ENCODE measurements at regions of chr15 and their contacts with region 1.

Region 1: GRCh38 chr15:38440353-38441129 is 13.4 kb upstream of the FAM98B start:
- DNase-seq: peak in 1 of 2 donors; percentile 56
- ATAC-seq: peak; percentile 83 to 97 (median 92)
- H3K4me3 ChIP-seq: no peak overlapping the region
- H3K27ac ChIP-seq: no peak overlapping the region
- H3K4me1 ChIP-seq: no peaks in the 10 kb centered on the region
- H3K27me3 ChIP-seq: peaks cover 0 to 5% (median 0%) of the 10 kb centered on the region in 3 donors
- CTCF ChIP-seq: peak; percentile 91

Region 2: DNA sequence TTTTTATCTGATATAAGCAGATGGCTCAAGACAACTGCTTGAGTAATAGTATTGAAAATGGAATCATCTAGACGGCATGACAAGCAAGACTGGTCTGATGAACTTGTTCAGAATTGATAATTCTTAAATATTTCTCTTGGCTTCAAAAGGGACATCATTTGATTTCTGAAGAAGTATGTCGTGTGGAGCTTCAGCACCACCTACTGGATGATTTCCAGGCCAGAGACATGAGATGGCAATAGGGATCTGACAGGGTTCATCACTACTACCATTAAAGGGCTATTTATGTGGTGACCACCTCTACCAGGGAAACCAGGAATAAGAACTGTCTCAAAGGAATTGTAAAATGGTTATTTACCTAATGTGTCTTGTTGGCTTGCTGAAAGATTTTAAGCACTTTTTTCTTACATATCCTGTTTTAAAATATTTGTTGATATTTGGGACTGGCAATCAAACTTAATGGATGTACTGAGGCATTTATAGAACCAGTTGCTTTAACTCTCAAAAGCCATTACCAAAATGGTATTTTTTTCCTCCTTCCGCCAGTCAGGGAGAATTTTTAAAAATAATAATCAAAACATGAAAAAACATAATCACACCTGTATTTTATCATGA is 86.1 kb before region 1 on chr15:
- intact Hi-C with region 1: no loop called
- DNase-seq: peak; percentile 29 to 45
- ATAC-seq: peak in 2 of 4 donors; percentile 47 to 71
- H3K4me3 ChIP-seq: no peak overlapping the region
- H3K27ac ChIP-seq: no peak overlapping the region
- H3K4me1 ChIP-seq: no peaks in the 10 kb centered on the region
- H3K27me3 ChIP-seq: no peaks in the 10 kb centered on the region
- CTCF ChIP-seq: peak; percentile 79

Region 3: DNA sequence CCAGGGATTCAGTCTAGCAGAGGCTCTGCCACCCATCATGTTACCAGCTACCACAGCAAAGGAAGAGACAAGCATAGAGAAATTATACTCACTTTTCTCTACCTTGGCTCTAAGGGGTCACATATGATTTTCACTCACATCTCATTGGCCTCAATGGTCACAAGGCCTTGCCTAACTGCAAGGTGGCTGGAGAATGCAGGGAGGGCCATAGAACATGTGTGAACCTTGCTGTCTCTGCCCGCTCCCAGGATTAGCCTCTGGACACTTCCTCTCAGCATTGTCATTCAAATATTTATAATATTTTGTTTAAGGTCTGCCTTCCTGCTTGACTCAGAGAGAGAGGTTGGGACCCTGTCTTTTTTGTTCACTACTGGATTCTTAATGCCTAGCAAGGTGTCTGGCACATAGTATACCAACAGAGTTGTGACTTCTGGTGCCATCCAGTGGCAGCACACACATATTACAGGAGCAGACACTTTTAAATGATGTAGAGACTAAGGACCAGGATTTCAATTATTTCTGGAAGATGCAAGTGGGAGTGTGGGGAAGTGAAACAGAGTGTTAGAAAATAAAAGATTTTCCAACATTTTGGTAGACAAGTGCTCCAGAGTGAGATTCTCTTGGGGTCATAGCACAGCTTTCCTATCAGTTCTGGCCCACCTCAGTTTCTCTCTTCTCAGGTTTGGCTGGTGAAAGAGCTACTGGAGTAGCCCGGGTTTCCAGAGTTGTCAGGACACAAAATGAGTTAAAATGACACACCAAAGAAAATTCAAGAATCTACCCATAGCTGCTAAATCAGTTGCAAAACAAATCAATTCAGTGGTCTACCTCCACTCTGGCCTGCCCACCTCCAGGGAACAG is 243.1 kb after region 1 on chr15:
- intact Hi-C with region 1: loop called (anchors 2 to 5 kb)
- DNase-seq: peak in 1 of 2 donors; percentile 15
- ATAC-seq: peak in 3 of 4 donors; percentile 56 to 74 (median 67)
- H3K4me3 ChIP-seq: no peak overlapping the region
- H3K27ac ChIP-seq: no peak overlapping the region
- H3K4me1 ChIP-seq: no peaks in the 10 kb centered on the region
- H3K27me3 ChIP-seq: peaks cover 0 to 4% (median 0%) of the 10 kb centered on the region in 3 donors
- CTCF ChIP-seq: peak; percentile 60

Region 4: GRCh38 chr15:38688761-38689160 is 248.2 kb after region 1 on chr15:
- intact Hi-C with region 1: loop called (anchors 2 to 5 kb)
- DNase-seq: no peak
- ATAC-seq: no peak
- H3K4me3 ChIP-seq: no peak overlapping the region
- H3K27ac ChIP-seq: no peak overlapping the region
- H3K4me1 ChIP-seq: no peaks in the 10 kb centered on the region
- H3K27me3 ChIP-seq: peaks cover 0 to 4% (median 0%) of the 10 kb centered on the region in 3 donors
- CTCF ChIP-seq: no peak

Region 5: DNA sequence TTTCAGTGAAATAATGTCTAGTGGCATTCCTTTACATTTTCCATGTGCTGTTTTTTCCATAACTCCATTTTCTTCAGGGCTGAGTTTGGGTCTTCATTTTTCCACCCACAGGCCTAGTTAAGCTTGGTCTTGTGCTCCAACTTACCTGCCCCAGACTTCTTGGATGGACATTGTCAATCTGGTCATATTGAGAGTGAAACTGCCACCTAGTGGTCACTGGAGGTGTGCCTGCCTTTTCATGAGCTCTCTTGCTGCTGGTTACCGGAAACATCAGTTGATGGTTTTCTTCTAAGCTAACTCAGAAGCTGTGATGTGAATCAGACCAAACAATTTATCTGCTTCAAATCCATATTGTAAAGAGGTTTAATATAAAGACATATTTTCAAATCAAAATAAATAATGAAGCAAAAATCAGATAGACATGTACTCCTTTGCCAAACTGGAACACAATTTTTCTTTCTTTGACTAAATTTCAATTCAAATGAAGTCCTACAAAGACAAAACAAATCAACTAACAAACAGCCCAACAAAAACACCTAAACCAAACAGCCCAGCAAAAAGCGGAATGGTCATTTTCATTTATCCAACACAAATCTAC is 259.2 kb after region 1 on chr15:
- intact Hi-C with region 1: loop called in 1 of 2 experiments (anchors 5 kb)
- DNase-seq: peak; percentile 19 to 56
- ATAC-seq: peak in 2 of 4 donors; percentile 49 to 56
- H3K4me3 ChIP-seq: no peak overlapping the region
- H3K27ac ChIP-seq: no peak overlapping the region
- H3K4me1 ChIP-seq: no peaks in the 10 kb centered on the region
- H3K27me3 ChIP-seq: no peaks in the 10 kb centered on the region
- CTCF ChIP-seq: peak; percentile 66

Region 6: DNA sequence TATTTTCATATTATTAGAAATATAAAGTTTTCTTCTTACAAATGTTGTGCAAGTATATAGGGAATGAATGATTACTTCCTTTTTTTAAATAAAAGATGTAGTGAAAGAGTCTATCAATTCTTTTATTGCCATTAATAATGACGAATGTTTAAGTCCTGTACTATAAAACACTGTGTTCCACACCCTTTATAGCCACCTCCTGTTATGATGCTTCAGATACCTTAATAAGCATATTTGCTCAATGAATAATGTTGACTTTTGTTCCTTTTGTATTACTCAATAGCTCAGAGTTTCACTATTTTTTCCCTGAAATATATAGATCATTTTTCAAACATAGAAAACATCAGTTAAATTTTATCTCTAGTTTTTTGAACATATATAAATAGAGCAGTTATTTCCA is 762.1 kb after region 1 on chr15:
- intact Hi-C with region 1: no loop called
- DNase-seq: no peak
- ATAC-seq: no peak
- H3K4me3 ChIP-seq: no peak overlapping the region
- H3K27ac ChIP-seq: no peak overlapping the region
- H3K4me1 ChIP-seq: no peaks in the 10 kb centered on the region
- H3K27me3 ChIP-seq: no peaks in the 10 kb centered on the region
- CTCF ChIP-seq: no peak